Naive thymus-derived CD4-positive, alpha-beta T cell (primary cell): ENCODE measurements at regions of chr10 and their contacts with region 1.

Region 1: DNA sequence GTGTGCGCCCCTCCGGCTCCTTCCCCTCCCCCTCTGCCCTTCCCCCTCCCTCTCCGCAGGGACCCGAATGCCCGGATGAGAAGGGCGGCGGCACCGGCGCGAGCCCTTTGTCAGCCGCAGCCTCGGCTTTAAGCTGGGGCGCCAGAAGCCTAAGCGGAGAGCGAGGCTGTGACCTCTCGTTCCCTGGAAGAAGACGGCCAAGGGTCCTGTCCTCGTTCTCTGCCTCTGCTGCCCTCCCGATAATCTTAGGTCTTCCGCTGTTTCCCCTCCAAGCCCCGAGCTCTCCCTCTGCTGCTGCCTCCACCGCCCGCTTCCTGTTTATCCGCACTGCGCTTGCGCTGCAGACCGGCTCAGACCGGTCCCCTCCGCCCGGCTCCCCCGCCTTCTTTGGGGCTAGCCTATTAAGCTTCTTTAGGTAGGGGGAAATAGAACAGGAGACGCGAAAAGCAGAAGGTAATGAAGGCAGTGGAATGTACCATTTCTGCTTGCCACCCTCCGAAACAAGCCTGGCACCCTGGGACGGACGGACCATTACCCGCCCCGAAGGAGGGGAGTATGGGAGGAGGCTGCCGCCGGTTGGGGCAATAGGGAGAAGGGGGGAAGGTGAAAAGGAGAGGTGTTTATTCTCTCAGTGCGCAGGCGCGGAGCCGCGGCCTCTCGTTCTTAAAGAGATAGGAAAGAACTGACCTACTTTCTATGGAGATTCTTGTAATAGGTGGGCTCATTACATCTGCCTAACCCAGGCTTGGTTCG is at the start of gene OGA:
- DNase-seq: peak; percentile 90 to 100 (median 99)
- ATAC-seq: peak; percentile 97
- H3K4me3 ChIP-seq: peak within 1 kb of the TSS; percentile 81
- H3K4me3 Mint-ChIP-seq: peak within 1 kb of the TSS; percentile 95 to 100 (median 97)
- H3K27ac ChIP-seq: peak within 1 kb of the TSS; percentile 82
- H3K27ac Mint-ChIP-seq: peak within 1 kb of the TSS; percentile 95 to 99 (median 98)
- H3K4me1 ChIP-seq: peaks cover 19 to 25% of the 10 kb centered on the region in 2 donors
- H3K4me1 Mint-ChIP-seq: peaks cover 34 to 57% (median 50%) of the 10 kb centered on the region in 7 donors
- H3K27me3 ChIP-seq: no peaks in the 10 kb centered on the region
- H3K27me3 Mint-ChIP-seq: peaks cover 0 to 4% (median 0%) of the 10 kb centered on the region in 5 donors
- total RNA-seq, gene OGA: 154 to 338 (median 321) TPM

Region 2: DNA sequence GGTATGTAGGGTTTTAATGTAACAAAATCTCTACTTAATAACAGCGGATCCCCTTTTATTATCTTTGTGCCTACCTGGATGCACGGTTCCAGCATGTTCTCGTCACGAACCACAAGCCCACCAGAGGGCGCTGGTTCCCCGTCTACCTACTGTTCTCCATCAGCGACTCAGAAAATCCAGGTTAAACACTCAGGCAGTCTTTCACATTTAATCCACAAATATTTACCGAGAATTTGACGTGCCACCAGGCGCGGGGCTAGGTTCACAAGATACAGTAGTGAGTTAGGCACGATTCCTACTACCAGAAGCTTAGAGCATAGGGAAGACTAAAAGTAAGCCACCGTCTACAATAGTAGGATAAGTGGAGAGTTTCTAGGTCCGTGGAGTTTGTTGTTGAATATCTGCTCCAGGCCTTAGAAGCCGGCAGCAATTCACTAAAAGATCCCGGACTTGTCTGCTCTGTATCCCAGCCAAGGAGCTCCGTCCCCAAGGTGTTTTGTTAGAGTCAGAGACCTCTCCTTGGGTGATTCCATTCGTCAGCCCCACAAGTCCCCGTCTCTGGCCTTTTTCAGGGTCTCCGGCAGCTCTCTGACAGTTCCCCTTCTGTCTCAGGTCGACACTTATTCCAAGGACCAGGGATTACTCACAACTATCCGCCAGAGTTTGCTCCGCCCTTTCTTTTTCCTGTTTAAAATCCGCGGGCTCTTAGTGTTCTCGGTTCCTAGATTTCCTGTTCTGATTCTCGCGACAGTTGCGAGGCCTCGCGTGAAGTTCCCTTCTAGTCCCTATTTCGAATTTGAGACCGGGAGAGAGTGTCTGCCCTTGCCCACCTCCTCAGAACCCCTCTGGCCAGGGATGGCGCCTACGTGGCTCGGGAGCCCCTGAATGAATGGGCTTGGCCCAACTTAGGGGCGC is 758.0 kb before region 1 on chr10:
- CTCF ChIA-PET with region 1: no interaction called
- POLR2A ChIA-PET with region 1: no interaction called
- intact Hi-C with region 1: loop called in 1 of 2 experiments (anchors 2 kb)
- DNase-seq: peak; percentile 70 to 97 (median 94)
- ATAC-seq: peak; percentile 82
- H3K4me3 ChIP-seq: peak overlapping the region; percentile 96
- H3K4me3 Mint-ChIP-seq: peak overlapping the region; percentile 90 to 99 (median 96)
- H3K27ac ChIP-seq: peak overlapping the region; percentile 96
- H3K27ac Mint-ChIP-seq: peak overlapping the region; percentile 86 to 98 (median 93)
- H3K4me1 ChIP-seq: peaks cover 12 to 21% of the 10 kb centered on the region in 2 donors
- H3K4me1 Mint-ChIP-seq: peaks cover 16 to 61% (median 31%) of the 10 kb centered on the region in 7 donors
- H3K27me3 ChIP-seq: peaks cover 5 to 18% of the 10 kb centered on the region in 2 donors
- H3K27me3 Mint-ChIP-seq: peaks cover 15 to 23% (median 18%) of the 10 kb centered on the region in 5 donors

Region 3: DNA sequence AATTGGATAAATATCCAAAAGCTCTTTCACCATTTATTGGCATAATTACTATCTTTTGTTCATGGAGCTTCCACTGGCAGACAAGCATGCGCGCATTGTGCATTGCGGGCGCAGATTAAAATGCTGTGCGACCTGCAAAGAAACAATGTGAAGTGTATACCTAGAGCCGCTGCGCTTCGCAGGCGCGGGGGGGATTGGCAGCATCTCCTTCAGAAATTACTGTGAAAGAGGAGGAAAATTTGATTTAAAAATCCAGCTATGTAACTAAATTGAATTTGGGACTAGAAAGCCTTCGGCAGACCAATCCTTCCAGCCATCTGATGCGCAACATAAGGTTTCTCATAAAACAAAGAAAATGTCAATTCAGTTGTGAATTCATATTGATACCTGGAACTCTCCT is 24.8 kb before region 1 on chr10:
- CTCF ChIA-PET with region 1: interaction called, 4 read pairs
- POLR2A ChIA-PET with region 1: interaction called, 11 read pairs
- intact Hi-C with region 1: no loop called
- DNase-seq: no peak
- ATAC-seq: no peak
- H3K4me3 ChIP-seq: no peak overlapping the region
- H3K4me3 Mint-ChIP-seq: no peak overlapping the region
- H3K27ac ChIP-seq: no peak overlapping the region
- H3K27ac Mint-ChIP-seq: no peak overlapping the region
- H3K4me1 ChIP-seq: peaks cover 0 to under 1% of the 10 kb centered on the region in 2 donors
- H3K4me1 Mint-ChIP-seq: peaks cover 0 to 27% (median 18%) of the 10 kb centered on the region in 7 donors
- H3K27me3 ChIP-seq: no peaks in the 10 kb centered on the region
- H3K27me3 Mint-ChIP-seq: no peaks in the 10 kb centered on the region

Region 4: GRCh38 chr10:101840741-101841453 is 22.6 kb after region 1 on chr10:
- CTCF ChIA-PET with region 1: interaction called, 21 read pairs
- POLR2A ChIA-PET with region 1: interaction called, 42 read pairs
- intact Hi-C with region 1: loop called (anchors 2 kb)
- DNase-seq: peak; percentile 35 to 83 (median 58)
- ATAC-seq: peak; percentile 76
- H3K4me3 ChIP-seq: peak overlapping the region; percentile 55
- H3K4me3 Mint-ChIP-seq: peak overlapping the region; percentile 72 to 91 (median 85)
- H3K27ac ChIP-seq: no peak overlapping the region
- H3K27ac Mint-ChIP-seq: peak overlapping the region in 5 of 9 donors; percentile 50 to 87 (median 79)
- H3K4me1 ChIP-seq: peaks cover 13 to 36% of the 10 kb centered on the region in 2 donors
- H3K4me1 Mint-ChIP-seq: peaks cover 34 to 65% (median 55%) of the 10 kb centered on the region in 7 donors
- H3K27me3 ChIP-seq: no peaks in the 10 kb centered on the region
- H3K27me3 Mint-ChIP-seq: peaks cover 0 to 19% (median 4%) of the 10 kb centered on the region in 5 donors

Region 5: DNA sequence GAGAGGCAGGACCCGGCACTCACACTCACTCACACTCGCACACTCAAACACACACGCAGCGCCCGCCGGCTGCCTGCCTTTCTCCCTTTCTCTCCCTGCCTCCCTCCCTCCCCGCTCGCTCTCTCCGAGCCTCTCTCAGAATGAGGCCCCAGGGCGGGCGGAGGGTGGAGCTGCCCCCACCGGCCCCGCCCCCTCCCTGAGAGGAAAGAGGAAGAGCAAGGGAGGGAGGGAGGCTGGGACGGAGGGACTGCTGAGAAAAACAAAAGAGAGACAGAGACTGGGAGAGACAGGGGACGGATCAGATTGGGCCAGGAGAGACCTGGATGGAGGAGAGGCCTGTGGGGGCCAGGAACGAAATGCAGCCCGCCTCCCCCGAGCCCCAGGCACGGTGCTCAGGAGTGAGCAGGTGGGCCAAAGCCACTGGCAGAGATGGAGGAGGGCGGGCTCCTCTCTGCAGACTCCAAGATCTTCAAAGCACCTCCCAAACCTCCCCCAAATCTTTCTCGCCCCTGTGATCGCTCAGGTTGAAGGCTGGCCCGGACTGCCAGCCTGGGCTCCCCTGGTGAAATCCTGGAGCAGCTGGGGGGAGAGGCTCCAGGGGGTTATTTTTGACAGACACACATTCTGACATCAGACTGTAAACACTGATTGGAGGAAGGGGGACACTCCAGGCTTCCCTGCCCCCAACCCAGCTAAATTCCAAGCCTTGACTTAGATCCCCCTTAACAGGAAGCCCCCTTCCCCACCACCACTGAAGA is 296.7 kb after region 1 on chr10:
- CTCF ChIA-PET with region 1: no interaction called
- POLR2A ChIA-PET with region 1: interaction called, 9 read pairs
- intact Hi-C with region 1: loop called (anchors 1 to 5 kb)
- DNase-seq: peak; percentile 61 to 83 (median 70)
- ATAC-seq: peak; percentile 86
- H3K4me3 ChIP-seq: peak overlapping the region; percentile 77
- H3K4me3 Mint-ChIP-seq: peak overlapping the region; percentile 84 to 97 (median 92)
- H3K27ac ChIP-seq: peak overlapping the region; percentile 97
- H3K27ac Mint-ChIP-seq: peak overlapping the region; percentile 80 to 98 (median 92)
- H3K4me1 ChIP-seq: peaks cover 49 to 58% of the 10 kb centered on the region in 2 donors
- H3K4me1 Mint-ChIP-seq: peaks cover 54 to 76% (median 67%) of the 10 kb centered on the region in 7 donors
- H3K27me3 ChIP-seq: no peaks in the 10 kb centered on the region
- H3K27me3 Mint-ChIP-seq: no peaks in the 10 kb centered on the region

Region 6: GRCh38 chr10:102225646-102226541 is 407.6 kb after region 1 on chr10 and contains the start of gene ELOVL3:
- CTCF ChIA-PET with region 1: no interaction called
- POLR2A ChIA-PET with region 1: no interaction called
- intact Hi-C with region 1: no loop called
- DNase-seq: peak; percentile 56 to 83 (median 79)
- ATAC-seq: peak; percentile 95
- H3K4me3 ChIP-seq: peak within 1 kb of the TSS; percentile 26
- H3K4me3 Mint-ChIP-seq: peak within 1 kb of the TSS; percentile 72 to 95 (median 80)
- H3K27ac ChIP-seq: no peak within 1 kb of the TSS
- H3K27ac Mint-ChIP-seq: peak within 1 kb of the TSS in 5 of 9 donors; percentile 14 to 78 (median 74)
- H3K4me1 ChIP-seq: peaks cover 20 to 22% of the 10 kb centered on the region in 2 donors
- H3K4me1 Mint-ChIP-seq: peaks cover 14 to 23% (median 21%) of the 10 kb centered on the region in 7 donors
- H3K27me3 ChIP-seq: peaks cover 3 to 5% of the 10 kb centered on the region in 2 donors
- H3K27me3 Mint-ChIP-seq: peaks cover 36 to 74% (median 39%) of the 10 kb centered on the region in 5 donors
- total RNA-seq, gene ELOVL3: not detected

Region 7: DNA sequence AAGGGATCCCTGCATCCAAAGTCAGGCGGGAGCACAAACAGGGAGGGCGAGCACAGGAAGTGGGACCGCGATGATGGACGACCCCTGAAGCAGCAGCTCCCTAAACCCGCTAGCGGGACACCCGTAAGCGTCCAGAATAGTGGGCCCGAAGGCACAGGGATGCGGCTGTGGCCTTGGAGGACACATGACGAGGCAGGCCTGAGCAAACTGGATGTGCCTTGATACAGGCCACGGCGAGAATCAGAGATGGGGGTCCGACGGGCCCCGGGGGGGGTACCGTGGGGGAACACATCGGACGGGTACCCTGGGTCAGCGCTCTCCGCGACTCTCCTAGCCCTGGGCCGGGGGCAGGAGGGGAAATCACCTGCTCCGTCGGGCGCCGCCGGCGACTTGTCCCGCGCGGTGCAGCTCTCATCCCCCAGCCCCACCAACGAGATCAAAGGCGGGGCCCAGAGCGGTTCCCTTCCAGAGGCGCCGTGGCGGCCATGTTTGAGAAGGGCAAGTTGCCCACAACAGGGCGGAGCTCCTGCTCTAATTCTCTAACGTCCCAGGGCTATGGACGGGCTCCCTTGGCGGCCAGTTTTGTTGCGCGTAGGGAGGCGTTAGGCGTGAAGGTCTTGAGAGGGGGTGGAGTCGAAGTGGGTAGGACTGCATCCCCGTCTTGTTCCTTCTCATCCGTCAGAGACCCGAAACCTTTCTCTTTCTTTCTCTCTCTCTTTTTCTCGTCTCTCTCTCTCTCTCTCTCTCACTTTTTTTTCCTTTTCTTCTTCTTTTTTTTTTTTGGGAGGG is 614.1 kb after region 1 on chr10 and contains the start of gene CUEDC2:
- CTCF ChIA-PET with region 1: no interaction called
- POLR2A ChIA-PET with region 1: interaction called, 4 read pairs
- intact Hi-C with region 1: loop called in 1 of 2 experiments (anchors 10 kb)
- DNase-seq: peak; percentile 86 to 97 (median 91)
- ATAC-seq: peak; percentile 98
- H3K4me3 ChIP-seq: peak within 1 kb of the TSS; percentile 96
- H3K4me3 Mint-ChIP-seq: peak within 1 kb of the TSS; percentile 81 to 96 (median 93)
- H3K27ac ChIP-seq: peak within 1 kb of the TSS; percentile 80
- H3K27ac Mint-ChIP-seq: peak within 1 kb of the TSS; percentile 90 to 97 (median 94)
- H3K4me1 ChIP-seq: peaks cover 28 to 49% of the 10 kb centered on the region in 2 donors
- H3K4me1 Mint-ChIP-seq: peaks cover 38 to 60% (median 48%) of the 10 kb centered on the region in 7 donors
- H3K27me3 ChIP-seq: no peaks in the 10 kb centered on the region
- H3K27me3 Mint-ChIP-seq: no peaks in the 10 kb centered on the region
- total RNA-seq, gene CUEDC2: 27.0 to 69.0 (median 31.9) TPM